ENCODE measurements at regions of chr2 and their contacts with region 1.

Region 1: DNA sequence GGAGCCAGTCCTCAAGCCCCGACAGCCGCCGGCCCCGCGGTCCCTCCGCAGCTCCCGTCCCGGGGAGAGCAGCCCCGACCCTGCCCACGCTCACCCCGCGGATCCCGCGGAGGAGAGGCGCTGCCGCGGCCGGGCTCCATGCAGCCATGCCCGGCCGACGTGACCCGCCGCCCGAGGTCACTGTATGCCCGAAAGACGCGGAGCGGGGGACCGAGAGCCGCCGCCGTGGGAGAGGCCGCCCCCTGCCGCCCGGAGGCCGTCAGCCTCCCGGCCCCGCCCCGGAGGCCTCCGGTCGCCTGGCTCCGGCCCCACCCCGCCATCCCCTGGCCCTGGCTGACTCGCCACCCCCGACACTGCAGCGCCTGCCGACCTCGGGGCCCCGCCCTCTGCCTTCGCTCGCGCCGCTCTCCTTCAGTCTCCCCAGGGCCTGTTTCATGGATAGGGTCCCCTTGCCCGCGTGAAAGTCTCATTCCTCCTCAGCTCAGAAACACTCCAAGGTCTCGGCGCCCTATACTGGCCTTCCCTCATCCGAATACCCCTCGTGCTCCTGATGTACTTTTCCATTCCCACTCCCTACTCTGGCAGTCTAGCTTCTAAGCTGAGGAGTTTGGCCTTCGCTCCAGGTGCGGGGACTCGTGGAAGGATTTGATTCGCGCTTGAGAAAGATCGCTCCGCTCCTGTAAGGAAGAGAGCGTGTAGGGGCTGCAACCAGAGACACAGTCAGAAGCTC is at the start of gene BOLA3:
- DNase-seq: peak; percentile 89
- H3K4me3 Mint-ChIP-seq: no peak within 1 kb of the TSS
- H3K27ac Mint-ChIP-seq: no peak within 1 kb of the TSS
- H3K4me1 Mint-ChIP-seq: peaks cover 8% of the 10 kb centered on the region
- H3K27me3 Mint-ChIP-seq: no peaks in the 10 kb centered on the region

Region 2: DNA sequence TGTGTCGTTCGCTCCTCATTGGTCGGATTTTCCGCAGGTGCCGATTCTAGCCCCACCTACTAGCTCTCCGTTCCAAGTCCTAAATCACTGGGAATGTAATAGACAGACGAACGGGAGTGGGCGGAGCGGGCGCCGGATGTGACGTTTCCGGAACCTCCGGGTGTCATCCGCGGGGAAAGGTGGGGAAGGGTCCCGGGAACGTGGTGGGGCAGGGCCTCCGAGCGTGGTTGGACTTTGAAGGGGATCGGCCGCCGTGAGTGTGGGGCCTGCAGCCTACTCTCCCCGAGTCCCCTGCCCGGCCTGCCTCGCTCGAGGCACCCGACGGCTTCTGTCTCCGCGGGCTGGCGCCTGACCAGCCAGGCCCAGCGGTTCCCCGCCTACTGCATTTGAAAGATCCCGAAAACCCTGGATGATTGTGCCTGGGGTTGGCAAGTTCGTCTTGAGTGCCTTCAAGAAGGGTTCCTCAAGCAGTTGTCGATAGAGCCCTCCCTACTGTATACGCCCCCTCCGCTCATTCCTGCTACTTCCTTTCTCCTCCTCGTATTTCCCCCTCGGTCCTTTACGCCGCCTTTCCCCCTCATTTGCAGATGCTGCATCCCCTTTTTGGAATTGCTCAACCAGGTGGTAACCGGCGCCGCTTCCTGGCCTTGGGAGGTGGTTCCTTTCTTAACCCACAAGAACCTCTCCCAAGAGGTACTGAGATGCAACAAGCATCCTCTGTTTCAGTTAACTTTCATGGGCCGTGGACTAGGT is 318.9 kb before region 1 on chr2 and contains the start of gene STAMBP:
- CTCF ChIA-PET with region 1: interaction called, 50 read pairs
- DNase-seq: peak; percentile 97
- H3K4me3 Mint-ChIP-seq: peak within 1 kb of the TSS; percentile 91
- H3K27ac Mint-ChIP-seq: peak within 1 kb of the TSS; percentile 94
- H3K4me1 Mint-ChIP-seq: peaks cover 40% of the 10 kb centered on the region
- H3K27me3 Mint-ChIP-seq: peaks cover 4% of the 10 kb centered on the region

Region 3: GRCh38 chr2:74119912-74120825 is 27.7 kb before region 1 on chr2:
- CTCF ChIA-PET with region 1: interaction called, 11 read pairs
- DNase-seq: peak; percentile 87
- H3K4me3 Mint-ChIP-seq: peak overlapping the region; percentile 79
- H3K27ac Mint-ChIP-seq: peak overlapping the region; percentile 87
- H3K4me1 Mint-ChIP-seq: peaks cover 11% of the 10 kb centered on the region
- H3K27me3 Mint-ChIP-seq: peaks cover 18% of the 10 kb centered on the region